ENCODE measurements at regions of chr12 and their contacts with region 1.

Region 1: GRCh38 chr12:4107436-4107878 is 166.1 kb upstream of the CCND2 start:
- DNase-seq: peak; percentile 86
- ATAC-seq: peak; percentile 94
- H3K4me3 ChIP-seq: no peak overlapping the region
- H3K27ac ChIP-seq: peak overlapping the region; percentile 13; the same call in 1 of the 2 replicates
- H3K4me1 ChIP-seq: peaks cover 24% of the 10 kb centered on the region
- H3K27me3 ChIP-seq: no peaks in the 10 kb centered on the region
- CTCF ChIP-seq: peak; percentile 70 to 86 (median 84)
- EP300 ChIP-seq: no peak; a peak in 1 of 4 replicates
- POLR2A ChIP-seq: no peak
- RAD21 ChIP-seq: peak; percentile 88

Region 2: DNA sequence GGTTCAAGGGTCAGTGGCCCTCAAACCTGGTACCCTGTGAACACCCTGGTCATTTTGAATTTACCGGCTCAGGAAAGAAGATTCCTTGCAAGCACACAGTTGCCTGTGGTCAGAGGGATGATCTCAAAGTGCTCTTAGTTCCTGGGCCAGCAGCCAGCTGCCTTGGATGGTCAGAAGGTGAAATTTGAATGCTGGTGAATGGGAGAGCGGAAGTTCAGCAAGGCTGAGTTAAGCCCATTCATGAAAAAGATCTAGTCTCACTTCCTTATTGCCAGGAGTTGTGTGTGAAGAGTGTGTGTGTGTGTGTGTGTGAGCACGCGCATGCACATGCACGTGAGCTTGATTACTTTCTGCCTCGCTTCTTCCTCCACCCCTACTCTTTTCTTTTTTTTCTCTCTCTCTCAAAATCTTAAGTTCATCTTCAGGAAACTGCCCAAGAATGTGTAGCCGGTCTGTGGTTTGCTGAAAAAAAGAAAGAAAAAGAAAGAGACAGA is 10.6 kb after region 1 on chr12:
- CTCF ChIA-PET with region 1: interaction called, 38 read pairs
- POLR2A ChIA-PET with region 1: interaction called, 12 read pairs
- RAD21 ChIA-PET with region 1: interaction called, 28 read pairs
- SMC1A ChIA-PET with region 1: interaction called, 33 read pairs
- in situ Hi-C with region 1: no loop called
- intact Hi-C with region 1: loop called (anchors 1 kb)
- DNase-seq: peak; percentile 89
- ATAC-seq: peak; percentile 54
- H3K4me3 ChIP-seq: peak overlapping the region; percentile 56
- H3K27ac ChIP-seq: peak overlapping the region; percentile 95
- H3K4me1 ChIP-seq: peaks cover 50% of the 10 kb centered on the region
- H3K27me3 ChIP-seq: no peaks in the 10 kb centered on the region
- CTCF ChIP-seq: no peak
- EP300 ChIP-seq: peak; percentile 83 to 94; a peak in 3 of 4 replicates
- POLR2A ChIP-seq: no peak
- RAD21 ChIP-seq: no peak

Region 3: DNA sequence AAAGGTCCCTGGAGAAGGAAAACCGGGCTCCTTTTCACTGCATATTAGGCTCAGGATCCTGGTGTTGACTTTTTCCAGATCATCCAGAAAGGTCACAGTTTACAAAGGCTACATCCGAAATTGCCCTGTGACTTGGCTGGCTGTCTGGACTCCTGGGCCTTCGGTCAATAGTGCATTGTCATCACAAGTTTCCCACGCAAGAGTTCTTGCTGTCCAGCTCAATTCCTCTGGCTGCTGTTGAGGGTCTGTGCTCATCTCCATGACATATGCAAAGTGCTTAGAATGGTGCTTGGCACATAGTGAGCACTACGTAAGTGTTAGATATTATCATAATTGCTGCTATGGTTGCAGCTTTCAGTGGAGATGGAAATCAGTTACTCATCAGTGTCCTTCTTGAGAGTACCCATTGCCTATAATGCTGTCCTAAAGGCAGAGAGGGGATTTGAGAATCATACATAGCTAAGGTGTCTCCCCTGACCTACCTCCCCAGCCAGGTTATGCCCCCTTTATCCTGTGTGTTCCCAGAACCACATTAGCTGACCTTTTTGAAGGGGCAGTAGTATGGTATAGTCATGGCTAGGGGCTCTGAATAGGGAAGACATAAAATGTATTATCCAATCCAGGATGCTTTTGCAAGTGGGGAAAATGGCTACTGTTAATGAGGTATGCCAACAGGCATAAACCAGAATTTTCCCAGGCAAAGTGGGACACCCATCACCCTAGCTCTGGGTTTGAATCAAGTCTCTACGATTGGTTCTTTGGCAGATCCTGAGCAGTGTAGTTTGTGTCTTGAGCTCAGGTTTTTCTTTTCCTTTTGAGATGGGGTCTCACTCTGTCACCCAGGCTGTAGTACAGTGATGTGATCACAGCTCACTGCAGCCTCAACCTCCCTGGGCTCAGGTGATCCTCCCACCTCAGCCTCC is 34.2 kb after region 1 on chr12:
- CTCF ChIA-PET with region 1: interaction called, 256 read pairs
- POLR2A ChIA-PET with region 1: interaction called, 245 read pairs
- RAD21 ChIA-PET with region 1: interaction called, 360 read pairs
- SMC1A ChIA-PET with region 1: interaction called, 395 read pairs
- in situ Hi-C with region 1: no loop called
- intact Hi-C with region 1: no loop called
- DNase-seq: no peak
- ATAC-seq: peak; percentile 54
- H3K4me3 ChIP-seq: no peak overlapping the region
- H3K27ac ChIP-seq: peak overlapping the region; percentile 45; the same call in 1 of the 2 replicates
- H3K4me1 ChIP-seq: peaks cover 69% of the 10 kb centered on the region
- H3K27me3 ChIP-seq: no peaks in the 10 kb centered on the region
- CTCF ChIP-seq: no peak
- EP300 ChIP-seq: peak in 1 of 2 experiments; percentile 40; a peak in 1 of 4 replicates
- POLR2A ChIP-seq: no peak
- RAD21 ChIP-seq: no peak

Region 4: GRCh38 chr12:4191642-4192041 is 84.2 kb after region 1 on chr12:
- CTCF ChIA-PET with region 1: interaction called, 3 read pairs
- POLR2A ChIA-PET with region 1: no interaction called
- RAD21 ChIA-PET with region 1: interaction called, 4 read pairs
- SMC1A ChIA-PET with region 1: interaction called, 12 read pairs
- in situ Hi-C with region 1: no loop called
- intact Hi-C with region 1: no loop called
- DNase-seq: no peak
- ATAC-seq: peak; percentile 99
- H3K4me3 ChIP-seq: no peak overlapping the region
- H3K27ac ChIP-seq: no peak overlapping the region
- H3K4me1 ChIP-seq: no peaks in the 10 kb centered on the region
- H3K27me3 ChIP-seq: no peaks in the 10 kb centered on the region
- CTCF ChIP-seq: no peak
- EP300 ChIP-seq: no peak
- POLR2A ChIP-seq: no peak
- RAD21 ChIP-seq: no peak

Region 5: GRCh38 chr12:4269279-4269991 is 162.0 kb after region 1 on chr12:
- CTCF ChIA-PET with region 1: interaction called, 184 read pairs
- POLR2A ChIA-PET with region 1: interaction called, 193 read pairs
- RAD21 ChIA-PET with region 1: interaction called, 129 read pairs
- SMC1A ChIA-PET with region 1: interaction called, 222 read pairs
- in situ Hi-C with region 1: no loop called
- intact Hi-C with region 1: no loop called
- DNase-seq: no peak
- ATAC-seq: peak; percentile 22
- H3K4me3 ChIP-seq: peak overlapping the region; percentile 70
- H3K27ac ChIP-seq: peak overlapping the region; percentile 68
- H3K4me1 ChIP-seq: peaks cover 17% of the 10 kb centered on the region
- H3K27me3 ChIP-seq: no peaks in the 10 kb centered on the region; a peak in 1 of 4 replicates
- CTCF ChIP-seq: peak; percentile 20 to 59 (median 33); a peak in 5 of 6 replicates
- EP300 ChIP-seq: peak in 1 of 2 experiments; percentile 75; a peak in 2 of 4 replicates
- POLR2A ChIP-seq: 0 out of 2 replicates have a peak, but pooled peaks have one; percentile 22
- RAD21 ChIP-seq: peak; percentile 46

Measured in GM12878 (cell line).